Naive thymus-derived CD4-positive, alpha-beta T cell (primary cell): ENCODE measurements at regions of chr2 and their contacts with region 1.

Region 1: DNA sequence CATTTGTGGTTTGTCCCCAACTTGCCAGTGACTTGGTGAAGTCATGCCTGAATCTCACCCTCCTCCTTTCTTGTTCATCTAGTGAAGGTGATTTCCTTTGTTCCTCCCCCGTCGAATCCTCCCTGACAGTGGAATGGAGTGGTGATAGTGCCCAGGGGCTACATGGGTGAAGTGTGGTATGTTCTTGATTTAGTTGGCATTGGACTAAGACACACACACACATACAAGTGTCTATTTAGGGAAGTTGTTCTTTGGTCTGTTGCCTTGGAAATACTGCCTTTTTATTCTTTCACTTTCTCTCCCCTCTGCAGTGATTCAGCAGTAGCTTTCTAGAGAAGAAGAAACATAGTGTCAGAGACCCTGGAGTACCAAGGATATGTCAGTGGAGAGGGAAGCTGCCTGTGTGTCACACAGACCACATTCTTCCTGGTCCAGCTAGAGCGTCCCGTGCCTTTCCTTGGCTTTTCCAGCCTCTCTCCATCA is 10.9 kb downstream of the INPP4A start:
- DNase-seq: peak in 5 of 9 donors; percentile 52 to 71 (median 54)
- ATAC-seq: peak; percentile 72
- H3K4me3 ChIP-seq: peak overlapping the region; percentile 10
- H3K4me3 Mint-ChIP-seq: peak overlapping the region; percentile 56 to 96 (median 78)
- H3K27ac ChIP-seq: peak overlapping the region; percentile 68
- H3K27ac Mint-ChIP-seq: peak overlapping the region; percentile 88 to 98 (median 93)
- H3K4me1 ChIP-seq: peaks cover 90 to 96% of the 10 kb centered on the region in 2 donors
- H3K4me1 Mint-ChIP-seq: peaks cover 82 to 100% (median 96%) of the 10 kb centered on the region in 7 donors
- H3K27me3 ChIP-seq: no peaks in the 10 kb centered on the region
- H3K27me3 Mint-ChIP-seq: no peaks in the 10 kb centered on the region

Region 2: DNA sequence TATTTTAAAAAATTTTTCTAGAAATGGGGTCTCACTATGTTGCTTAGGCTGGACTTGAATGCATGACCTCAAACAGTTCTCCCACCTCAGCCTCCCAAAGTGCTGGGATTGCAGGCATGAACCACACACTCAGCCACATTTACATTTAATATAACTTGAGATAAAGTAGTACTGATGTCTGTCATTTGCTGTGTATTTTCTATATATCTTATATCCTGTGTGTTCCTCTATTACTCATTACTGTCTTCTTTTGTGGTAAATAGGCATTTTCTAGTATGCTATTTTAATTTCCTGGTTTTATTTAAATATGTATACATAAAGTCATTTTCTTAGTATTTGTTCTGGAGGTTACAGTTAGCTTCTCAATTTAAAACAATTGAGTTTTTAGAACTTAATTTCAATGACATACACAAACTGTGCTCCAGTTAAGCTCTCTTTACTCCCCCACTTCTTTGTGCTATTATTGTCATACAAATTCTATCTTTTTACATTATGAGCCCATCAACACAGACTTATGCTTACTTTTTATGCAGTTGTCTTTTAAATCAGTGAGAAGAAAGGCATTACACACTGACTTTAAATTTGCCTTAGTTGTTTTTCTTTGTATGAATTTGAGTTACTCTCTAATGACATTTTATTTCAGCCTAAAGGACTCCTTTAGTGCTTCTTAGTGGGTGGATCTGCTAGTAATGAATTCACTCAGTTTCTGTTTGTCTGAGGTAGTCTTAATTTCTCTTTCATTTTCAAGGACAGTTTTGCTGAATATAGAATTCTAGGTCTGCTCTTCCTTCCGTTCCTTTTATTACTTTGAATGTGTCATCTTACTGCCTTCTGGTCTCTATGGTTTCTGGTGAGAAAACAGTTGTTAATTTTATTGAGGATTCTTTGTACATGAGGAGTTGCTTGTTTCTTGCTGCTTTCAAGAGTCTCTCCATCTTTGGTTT is 17.1 kb before region 1 on chr2:
- CTCF ChIA-PET with region 1: no interaction called
- POLR2A ChIA-PET with region 1: interaction called, 3 read pairs
- intact Hi-C with region 1: loop called in 1 of 2 experiments (anchors 1 kb)
- DNase-seq: peak in 1 of 9 donors; percentile 40
- ATAC-seq: peak; percentile 82
- H3K4me3 ChIP-seq: no peak overlapping the region
- H3K4me3 Mint-ChIP-seq: peak overlapping the region in 1 of 10 donors; percentile 74
- H3K27ac ChIP-seq: no peak overlapping the region
- H3K27ac Mint-ChIP-seq: peak overlapping the region in 6 of 9 donors; percentile 1 to 92 (median 8)
- H3K4me1 ChIP-seq: no peaks in the 10 kb centered on the region
- H3K4me1 Mint-ChIP-seq: peaks cover 0 to 35% (median 5%) of the 10 kb centered on the region in 7 donors
- H3K27me3 ChIP-seq: no peaks in the 10 kb centered on the region
- H3K27me3 Mint-ChIP-seq: no peaks in the 10 kb centered on the region

Region 3: DNA sequence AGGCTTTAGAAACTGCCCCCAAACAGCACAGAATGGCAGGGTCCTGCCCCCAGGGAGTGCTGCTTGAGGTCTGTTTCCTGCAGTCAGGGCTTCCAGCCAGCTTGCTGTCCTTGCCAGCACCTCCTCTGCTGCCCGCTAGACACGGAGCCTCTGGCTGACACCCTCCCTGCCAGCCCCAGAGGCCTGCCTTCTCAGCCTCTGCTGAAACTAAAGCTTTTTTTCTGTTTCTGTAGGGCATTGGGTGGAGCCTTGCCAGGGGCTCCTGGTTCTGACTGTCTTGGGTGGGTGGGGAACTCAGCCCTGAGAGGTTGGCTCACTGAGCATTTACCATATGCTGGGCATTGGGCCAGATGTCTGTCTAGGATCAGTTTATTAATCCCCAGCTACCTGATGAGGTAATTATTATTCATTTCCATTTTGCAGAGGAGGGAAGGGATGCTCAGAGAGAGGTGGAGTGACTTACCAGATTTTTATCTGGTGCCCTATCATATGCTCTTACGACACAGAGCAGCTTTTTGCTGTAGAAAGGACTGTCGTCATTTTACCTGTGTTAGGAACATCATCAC is 24.5 kb after region 1 on chr2:
- CTCF ChIA-PET with region 1: interaction called, 3 read pairs
- POLR2A ChIA-PET with region 1: interaction called, 99 read pairs
- intact Hi-C with region 1: loop called in 1 of 2 experiments (anchors 2 kb)
- DNase-seq: peak in 1 of 9 donors; percentile 70
- ATAC-seq: peak; percentile 58
- H3K4me3 ChIP-seq: peak overlapping the region; percentile 8
- H3K4me3 Mint-ChIP-seq: peak overlapping the region; percentile 41 to 82 (median 72)
- H3K27ac ChIP-seq: peak overlapping the region; percentile 64
- H3K27ac Mint-ChIP-seq: peak overlapping the region; percentile 81 to 95 (median 91)
- H3K4me1 ChIP-seq: peaks cover 87 to 97% of the 10 kb centered on the region in 2 donors
- H3K4me1 Mint-ChIP-seq: peaks cover 80 to 100% (median 98%) of the 10 kb centered on the region in 7 donors
- H3K27me3 ChIP-seq: no peaks in the 10 kb centered on the region
- H3K27me3 Mint-ChIP-seq: no peaks in the 10 kb centered on the region

Region 4: GRCh38 chr2:98552499-98553179 is 97.1 kb after region 1 on chr2:
- CTCF ChIA-PET with region 1: no interaction called
- POLR2A ChIA-PET with region 1: no interaction called
- intact Hi-C with region 1: loop called in 1 of 2 experiments (anchors 5 kb)
- DNase-seq: no peak
- ATAC-seq: no peak
- H3K4me3 ChIP-seq: no peak overlapping the region
- H3K4me3 Mint-ChIP-seq: peak overlapping the region in 1 of 10 donors; percentile 38
- H3K27ac ChIP-seq: no peak overlapping the region
- H3K27ac Mint-ChIP-seq: peak overlapping the region in 8 of 9 donors; percentile 3 to 89 (median 58)
- H3K4me1 ChIP-seq: peaks cover 0 to 3% of the 10 kb centered on the region in 2 donors
- H3K4me1 Mint-ChIP-seq: peaks cover 32 to 72% (median 56%) of the 10 kb centered on the region in 7 donors
- H3K27me3 ChIP-seq: no peaks in the 10 kb centered on the region
- H3K27me3 Mint-ChIP-seq: no peaks in the 10 kb centered on the region

Region 5: DNA sequence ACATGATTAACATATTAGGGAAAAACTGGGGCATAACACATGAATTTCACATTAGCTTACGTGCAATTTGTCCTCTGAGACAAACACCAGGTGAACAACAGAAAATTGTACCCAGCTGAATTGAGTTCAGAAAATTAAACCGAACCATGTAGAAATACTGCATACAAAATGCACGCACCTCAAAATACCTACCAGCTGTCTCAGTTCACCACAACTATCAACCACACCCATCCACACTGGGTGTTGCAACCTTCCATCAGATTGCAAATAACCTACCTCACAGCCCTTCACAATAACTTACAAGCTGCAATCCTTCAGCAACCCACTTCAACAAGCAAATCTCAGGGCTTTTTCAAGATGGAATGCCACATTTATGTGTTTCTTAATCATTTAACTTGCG is 208.8 kb after region 1 on chr2:
- CTCF ChIA-PET with region 1: no interaction called
- POLR2A ChIA-PET with region 1: no interaction called
- intact Hi-C with region 1: loop called (anchors 5 kb)
- DNase-seq: peak in 8 of 9 donors; percentile 39 to 88 (median 80)
- ATAC-seq: peak; percentile 83
- H3K4me3 ChIP-seq: peak overlapping the region; percentile 14
- H3K4me3 Mint-ChIP-seq: peak overlapping the region; percentile 56 to 94 (median 80)
- H3K27ac ChIP-seq: peak overlapping the region; percentile 79
- H3K27ac Mint-ChIP-seq: peak overlapping the region; percentile 91 to 99 (median 97)
- H3K4me1 ChIP-seq: peaks cover 51 to 70% of the 10 kb centered on the region in 2 donors
- H3K4me1 Mint-ChIP-seq: peaks cover 35 to 93% (median 75%) of the 10 kb centered on the region in 7 donors
- H3K27me3 ChIP-seq: no peaks in the 10 kb centered on the region
- H3K27me3 Mint-ChIP-seq: no peaks in the 10 kb centered on the region